H1 (cell line): ENCODE measurements at regions of chr11 and their contacts with region 1.

Region 1: DNA sequence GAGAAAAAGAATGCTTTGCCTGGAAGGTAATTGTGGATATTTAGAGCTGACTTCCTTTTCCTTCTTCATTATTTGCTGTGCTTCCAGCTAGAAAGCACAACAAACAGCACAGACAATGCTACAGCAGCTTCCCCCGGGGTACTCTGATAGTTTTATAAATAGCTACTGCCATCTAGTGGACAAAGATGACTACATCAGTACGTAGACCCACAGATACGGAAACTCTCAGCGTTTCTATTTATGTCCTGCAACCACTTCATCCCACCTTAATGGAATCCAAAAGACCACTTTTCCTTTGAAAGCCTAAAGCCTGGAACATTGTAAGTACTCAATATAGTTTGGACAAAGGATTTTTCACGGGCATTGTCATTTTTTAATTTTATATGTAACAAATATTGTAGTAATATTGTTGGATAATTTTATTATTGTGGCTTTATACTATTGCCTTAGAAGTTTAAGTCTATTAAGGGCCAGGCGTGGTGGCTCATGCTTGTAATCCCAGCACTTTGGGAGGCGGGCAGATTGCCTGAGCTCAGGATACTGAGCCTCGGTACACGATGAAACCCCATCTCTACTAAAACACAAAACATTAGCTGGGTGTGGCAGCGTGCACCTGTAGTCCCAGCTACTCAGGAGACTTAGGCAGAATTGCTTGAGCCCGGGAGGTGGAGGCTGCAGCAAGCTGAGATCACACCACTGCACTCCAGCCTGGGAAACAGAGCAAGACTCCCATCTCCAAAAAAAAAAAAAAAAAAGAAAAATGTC is 7.5 kb downstream of the HSPA8 start:
- DNase-seq: no peak
- H3K4me3 ChIP-seq: no peak overlapping the region
- H3K27ac ChIP-seq: no peak overlapping the region
- H3K4me1 ChIP-seq: peaks cover 0 to 5% (median 2%) of the 10 kb centered on the region in 4 experiments; a peak in 4 of 7 replicates
- H3K27me3 ChIP-seq: no peaks in the 10 kb centered on the region
- CTCF ChIP-seq: peak in 2 of 3 experiments; percentile 66 to 68; a peak in 3 of 4 replicates
- EP300 ChIP-seq: no peak
- POLR2A ChIP-seq: peak in 1 of 2 experiments; percentile 18; a peak in 1 of 3 replicates
- RAD21 ChIP-seq: peak; percentile 70 to 80

Region 2: DNA sequence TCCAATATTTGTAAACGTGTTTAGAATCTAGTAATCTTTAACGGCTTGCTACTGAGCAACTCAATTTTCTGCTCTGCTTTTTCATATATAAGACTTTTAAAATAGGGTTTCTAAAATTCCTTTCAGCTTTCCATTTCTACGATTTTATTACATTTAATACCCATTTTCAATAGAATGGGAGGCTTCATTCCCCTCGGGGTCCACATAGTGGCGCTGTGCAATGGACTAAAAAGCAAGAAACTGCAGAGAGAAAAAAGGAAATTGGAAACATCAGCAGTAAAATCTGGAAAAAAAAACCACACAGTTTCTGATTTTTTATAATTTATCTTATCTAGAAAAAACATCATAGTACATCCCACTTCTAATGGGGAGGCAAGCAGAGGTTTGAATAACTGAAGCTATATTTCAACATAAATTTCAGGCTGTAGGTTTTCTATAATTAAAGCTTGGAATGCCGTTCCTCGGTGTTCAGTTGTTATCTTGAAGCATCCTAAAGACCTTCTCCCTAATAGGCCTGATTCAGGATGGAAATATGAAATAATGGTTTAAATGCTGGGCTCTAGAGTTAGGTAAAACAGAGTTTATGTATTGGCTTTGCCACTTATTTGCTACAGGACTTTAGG is 190.7 kb before region 1 on chr11:
- CTCF ChIA-PET with region 1: interaction called, 22 read pairs
- POLR2A ChIA-PET with region 1: interaction called, 11 read pairs
- DNase-seq: no peak
- H3K4me3 ChIP-seq: no peak overlapping the region
- H3K27ac ChIP-seq: no peak overlapping the region
- H3K4me1 ChIP-seq: no peaks in the 10 kb centered on the region
- H3K27me3 ChIP-seq: no peaks in the 10 kb centered on the region
- CTCF ChIP-seq: peak in 2 of 3 experiments; percentile 61 to 73; a peak in 3 of 4 replicates
- EP300 ChIP-seq: no peak
- POLR2A ChIP-seq: no peak
- RAD21 ChIP-seq: peak; percentile 80 to 82

Region 3: DNA sequence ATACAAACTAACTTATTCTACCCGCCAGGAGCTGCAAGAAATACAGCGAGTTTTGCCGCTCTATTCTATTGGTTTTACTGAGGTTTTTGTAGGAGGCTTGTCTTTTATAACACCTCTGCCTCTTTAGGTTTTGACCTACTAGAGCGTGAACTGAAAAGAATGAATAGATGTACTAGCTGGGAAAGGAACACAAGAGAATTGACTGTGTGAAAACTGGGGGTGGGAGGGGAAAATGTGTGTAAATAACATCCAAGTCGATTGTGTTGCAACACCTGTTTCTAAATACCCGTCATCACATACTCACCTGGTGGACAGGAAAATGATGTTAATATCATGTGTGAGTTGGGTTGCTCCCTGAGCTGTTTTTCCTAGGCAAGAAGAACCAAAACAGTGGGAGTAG is 184.9 kb before region 1 on chr11:
- CTCF ChIA-PET with region 1: interaction called, 22 read pairs
- POLR2A ChIA-PET with region 1: interaction called, 3 read pairs
- DNase-seq: no peak
- H3K4me3 ChIP-seq: no peak overlapping the region
- H3K27ac ChIP-seq: no peak overlapping the region
- H3K4me1 ChIP-seq: no peaks in the 10 kb centered on the region
- H3K27me3 ChIP-seq: no peaks in the 10 kb centered on the region
- CTCF ChIP-seq: no peak
- EP300 ChIP-seq: no peak
- POLR2A ChIP-seq: no peak
- RAD21 ChIP-seq: no peak

Region 4: DNA sequence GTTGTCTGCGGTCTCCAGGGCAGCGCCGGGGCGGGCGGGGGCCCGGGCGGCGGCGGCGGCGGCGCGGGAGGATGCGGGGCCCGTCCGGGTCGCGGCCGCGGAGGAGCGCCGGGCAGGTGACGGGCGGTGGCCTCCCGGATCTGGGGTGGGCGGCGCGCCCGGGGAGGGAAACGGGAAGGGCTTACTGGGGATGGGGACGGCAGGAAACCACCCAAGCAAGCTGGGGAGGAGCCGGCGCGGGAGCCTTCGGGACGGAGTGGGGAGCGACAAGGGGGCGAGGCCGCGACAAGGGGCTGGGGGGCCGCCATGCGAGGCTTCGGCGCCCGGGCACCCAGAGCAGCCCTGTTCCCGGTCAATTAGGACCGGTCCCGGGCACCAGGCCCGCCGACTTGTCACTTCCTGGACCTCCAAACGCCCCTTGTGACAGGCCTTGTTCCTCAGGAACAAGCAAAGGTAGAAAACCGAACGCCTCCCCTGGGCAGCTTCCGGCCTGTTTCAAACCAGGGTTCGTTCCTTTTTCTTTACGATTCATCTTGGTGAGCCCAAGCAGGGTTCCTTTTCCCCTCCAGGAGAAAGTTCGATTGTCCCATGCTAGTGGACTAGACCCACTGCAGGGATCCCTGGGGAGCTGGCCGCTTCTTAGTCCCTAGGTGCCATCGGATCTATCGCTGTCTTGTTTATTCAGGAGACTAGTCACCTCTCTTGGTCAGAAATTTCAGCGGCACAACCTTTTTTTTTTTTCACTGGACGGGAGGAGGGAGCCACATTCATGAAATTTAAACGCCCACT is 171.4 kb before region 1 on chr11:
- CTCF ChIA-PET with region 1: interaction called, 13 read pairs
- POLR2A ChIA-PET with region 1: no interaction called
- DNase-seq: peak in 1 of 2 experiments; percentile 78
- H3K4me3 ChIP-seq: peak overlapping the region; percentile 66 to 81 (median 68)
- H3K27ac ChIP-seq: no peak overlapping the region
- H3K4me1 ChIP-seq: peaks cover 0 to 11% (median 5%) of the 10 kb centered on the region in 4 experiments; a peak in 5 of 7 replicates
- H3K27me3 ChIP-seq: peaks cover 0 to 13% (median 10%) of the 10 kb centered on the region in 4 experiments; a peak in 5 of 7 replicates
- CTCF ChIP-seq: no peak
- EP300 ChIP-seq: no peak
- POLR2A ChIP-seq: peak in 1 of 2 experiments; percentile 28; a peak in 1 of 3 replicates
- RAD21 ChIP-seq: no peak

Region 5: DNA sequence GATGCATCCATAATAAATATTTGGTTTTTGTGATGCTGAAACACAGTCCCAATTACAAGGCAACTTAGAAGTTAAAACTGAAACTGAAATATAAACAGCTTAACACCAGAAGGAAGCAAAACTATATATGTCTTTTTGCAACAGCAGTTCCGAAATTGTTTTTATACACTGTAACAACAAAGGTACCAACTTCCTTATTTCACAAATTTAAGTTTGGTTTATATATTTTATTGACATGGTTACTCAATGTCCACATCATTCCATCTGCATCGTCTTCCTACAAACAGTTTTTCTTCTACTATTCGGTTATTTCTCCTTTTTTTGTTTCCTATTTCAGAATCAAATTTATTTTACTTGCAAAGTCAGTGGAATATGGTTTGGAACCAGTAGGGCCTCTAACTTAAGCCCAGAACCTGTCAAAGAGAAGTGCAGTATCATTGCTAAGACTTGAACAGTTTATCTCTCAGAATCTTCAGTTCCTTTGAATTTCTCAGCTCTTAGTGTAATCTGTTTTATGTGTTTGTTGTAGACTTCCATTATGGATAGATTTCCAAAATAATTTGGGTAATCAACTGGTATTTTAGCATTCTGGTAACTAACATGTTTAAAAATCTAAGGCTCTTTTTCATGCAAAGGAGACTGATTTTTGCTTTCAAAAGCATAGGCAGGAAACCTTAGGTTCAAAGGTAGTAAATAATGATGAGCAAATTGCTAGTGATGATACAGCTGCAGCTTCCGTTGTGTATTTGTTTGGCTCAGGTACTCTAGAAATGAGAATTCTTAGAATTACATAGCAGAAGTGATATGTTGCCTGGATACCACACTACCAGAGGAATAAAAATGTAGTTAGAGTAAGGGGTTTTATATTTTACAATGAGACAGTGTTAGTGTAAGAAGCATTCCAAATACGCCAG is 15.7 kb after region 1 on chr11:
- CTCF ChIA-PET with region 1: interaction called, 6 read pairs
- POLR2A ChIA-PET with region 1: interaction called, 11 read pairs
- DNase-seq: no peak
- H3K4me3 ChIP-seq: no peak overlapping the region
- H3K27ac ChIP-seq: no peak overlapping the region
- H3K4me1 ChIP-seq: peaks cover 0 to 11% (median 1%) of the 10 kb centered on the region in 4 experiments; a peak in 5 of 7 replicates
- H3K27me3 ChIP-seq: no peaks in the 10 kb centered on the region
- CTCF ChIP-seq: no peak
- EP300 ChIP-seq: no peak
- POLR2A ChIP-seq: no peak
- RAD21 ChIP-seq: no peak

Region 6: GRCh38 chr11:123129920-123130319 is 75.4 kb after region 1 on chr11:
- CTCF ChIA-PET with region 1: no interaction called
- POLR2A ChIA-PET with region 1: no interaction called
- DNase-seq: no peak
- H3K4me3 ChIP-seq: no peak overlapping the region
- H3K27ac ChIP-seq: no peak overlapping the region
- H3K4me1 ChIP-seq: no peaks in the 10 kb centered on the region; a peak in 1 of 7 replicates
- H3K27me3 ChIP-seq: no peaks in the 10 kb centered on the region
- CTCF ChIP-seq: no peak
- EP300 ChIP-seq: no peak
- POLR2A ChIP-seq: no peak
- RAD21 ChIP-seq: no peak

Region 7: DNA sequence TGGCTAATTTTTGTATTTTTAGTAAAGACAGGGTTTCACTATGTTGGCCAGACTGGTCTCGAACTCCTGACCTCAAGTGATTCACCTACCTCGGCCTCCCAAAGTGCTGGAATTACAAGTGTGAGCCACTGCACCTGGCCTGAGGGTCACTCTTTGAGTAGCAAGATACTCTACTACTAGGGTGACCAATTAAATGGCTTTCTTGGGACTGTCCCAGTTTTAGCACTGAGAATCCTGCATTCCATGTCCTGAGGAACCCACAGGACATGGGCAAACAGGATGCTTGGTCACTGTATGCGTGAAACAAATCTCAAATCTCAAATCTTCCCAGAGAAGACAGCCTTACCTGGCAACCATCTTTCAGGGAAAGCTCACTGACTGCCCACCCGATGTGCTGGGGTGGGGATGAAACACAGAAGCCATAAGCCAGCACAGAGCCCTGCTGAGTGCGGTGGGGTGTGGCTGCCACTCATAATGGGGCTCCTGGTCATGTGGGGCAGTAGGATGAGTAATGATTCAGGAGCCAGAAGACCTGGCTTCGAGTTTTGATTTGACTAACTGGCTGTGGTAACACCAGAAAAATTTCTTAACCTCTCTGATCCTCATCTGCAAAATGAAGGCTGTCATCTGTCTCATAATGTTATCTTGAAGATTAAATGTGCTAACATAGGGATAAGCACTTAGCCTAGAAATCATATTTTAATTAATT is 129.1 kb after region 1 on chr11:
- CTCF ChIA-PET with region 1: no interaction called
- POLR2A ChIA-PET with region 1: no interaction called
- DNase-seq: no peak
- H3K4me3 ChIP-seq: no peak overlapping the region
- H3K27ac ChIP-seq: no peak overlapping the region
- H3K4me1 ChIP-seq: peaks cover 5 to 29% (median 14%) of the 10 kb centered on the region in 4 experiments
- H3K27me3 ChIP-seq: no peaks in the 10 kb centered on the region
- CTCF ChIP-seq: no peak
- EP300 ChIP-seq: no peak
- POLR2A ChIP-seq: no peak
- RAD21 ChIP-seq: no peak